ENCODE measurements at regions of chr5 and their contacts with region 1.

Region 1: GRCh38 chr5:16797951-16798350 is 138.1 kb downstream of the MYO10 start:
- DNase-seq: no peak
- H3K4me3 ChIP-seq: no peak overlapping the region
- H3K27ac ChIP-seq: no peak overlapping the region
- H3K4me1 ChIP-seq: peaks cover 51% of the 10 kb centered on the region
- H3K27me3 ChIP-seq: no peaks in the 10 kb centered on the region
- CTCF ChIP-seq: no peak

Region 2: DNA sequence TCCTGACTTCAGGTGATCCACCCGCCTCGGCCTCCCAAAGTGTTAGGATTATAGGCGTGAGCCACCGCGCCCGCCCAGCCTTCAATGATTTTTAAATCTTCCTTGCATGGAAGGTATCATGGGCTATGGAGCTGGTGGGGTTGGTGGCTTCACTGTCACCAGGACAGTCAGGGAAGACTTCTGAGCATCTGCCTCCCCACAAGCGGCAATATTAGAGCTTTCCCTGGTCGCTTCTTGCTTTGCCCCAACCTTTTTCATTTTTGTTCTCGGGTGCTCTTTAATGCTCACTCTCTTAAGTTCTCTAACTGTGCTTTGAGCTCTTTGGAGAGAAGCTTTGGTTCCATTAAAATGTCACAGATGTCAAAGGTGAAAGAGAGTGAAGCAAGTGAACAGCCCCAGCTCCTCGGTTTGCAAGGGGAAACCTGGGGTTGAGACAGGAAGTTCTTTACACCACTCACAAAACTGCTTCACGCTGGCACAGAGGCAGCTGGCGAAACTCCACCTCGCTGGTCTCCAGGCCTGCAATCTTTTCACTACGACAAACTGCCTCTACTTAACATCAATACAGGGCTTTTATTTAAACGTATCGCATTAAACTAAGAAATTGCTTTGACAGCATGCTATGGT is 38.7 kb before region 1 on chr5:
- CTCF ChIA-PET with region 1: no interaction called
- POLR2A ChIA-PET with region 1: no interaction called
- intact Hi-C with region 1: no loop called
- DNase-seq: peak; percentile 58
- H3K4me3 ChIP-seq: no peak overlapping the region
- H3K27ac ChIP-seq: peak overlapping the region; percentile 31
- H3K4me1 ChIP-seq: peaks cover 30% of the 10 kb centered on the region
- H3K27me3 ChIP-seq: no peaks in the 10 kb centered on the region
- CTCF ChIP-seq: no peak

Region 3: DNA sequence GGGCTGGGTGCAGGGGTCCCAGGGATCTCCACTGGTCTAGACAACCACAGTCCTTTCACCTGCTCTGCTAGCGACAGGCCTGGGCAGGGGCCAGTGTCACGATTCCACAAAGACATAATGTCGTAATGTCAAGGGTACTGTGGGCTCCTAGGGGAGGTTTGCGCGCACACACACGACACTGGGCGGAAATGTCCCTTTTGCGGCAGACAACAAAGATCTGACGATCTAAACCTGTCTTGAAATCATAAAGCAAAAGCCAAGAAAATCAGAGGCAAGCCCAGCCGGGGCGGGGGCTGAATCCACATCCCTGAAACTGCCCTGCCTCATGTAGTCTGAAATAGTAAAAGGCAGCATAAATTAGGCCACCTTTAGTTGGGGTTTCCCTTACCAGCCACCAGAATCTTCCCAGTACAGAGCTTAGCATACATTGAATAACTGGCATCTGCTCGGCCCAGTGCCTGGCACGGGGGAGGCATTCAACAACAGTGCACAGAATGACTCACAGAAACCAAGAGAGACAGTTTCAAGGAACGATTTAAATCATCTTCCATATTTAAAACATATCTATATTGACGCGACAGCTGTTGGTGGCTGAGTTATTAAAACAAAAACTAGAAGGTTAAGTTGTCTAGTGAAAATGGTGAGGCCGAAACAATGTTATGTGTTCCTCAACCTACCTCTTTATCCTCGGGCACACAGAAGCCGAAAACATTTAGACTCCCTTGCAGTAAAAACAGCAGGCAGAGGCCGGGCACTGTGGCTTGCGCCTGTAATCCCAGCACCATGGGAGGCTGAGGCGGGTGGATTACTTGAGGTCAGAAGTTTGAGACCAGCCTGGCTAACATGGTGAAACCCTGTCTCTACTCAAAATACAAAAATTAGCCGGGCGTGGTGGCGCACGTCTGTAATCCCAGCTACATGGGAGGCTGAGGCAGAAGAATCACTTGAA is 12.8 kb before region 1 on chr5:
- CTCF ChIA-PET with region 1: no interaction called
- POLR2A ChIA-PET with region 1: no interaction called
- intact Hi-C with region 1: loop called (anchors 1 kb)
- DNase-seq: no peak
- H3K4me3 ChIP-seq: no peak overlapping the region
- H3K27ac ChIP-seq: no peak overlapping the region
- H3K4me1 ChIP-seq: peaks cover 40% of the 10 kb centered on the region
- H3K27me3 ChIP-seq: no peaks in the 10 kb centered on the region
- CTCF ChIP-seq: no peak

Region 4: DNA sequence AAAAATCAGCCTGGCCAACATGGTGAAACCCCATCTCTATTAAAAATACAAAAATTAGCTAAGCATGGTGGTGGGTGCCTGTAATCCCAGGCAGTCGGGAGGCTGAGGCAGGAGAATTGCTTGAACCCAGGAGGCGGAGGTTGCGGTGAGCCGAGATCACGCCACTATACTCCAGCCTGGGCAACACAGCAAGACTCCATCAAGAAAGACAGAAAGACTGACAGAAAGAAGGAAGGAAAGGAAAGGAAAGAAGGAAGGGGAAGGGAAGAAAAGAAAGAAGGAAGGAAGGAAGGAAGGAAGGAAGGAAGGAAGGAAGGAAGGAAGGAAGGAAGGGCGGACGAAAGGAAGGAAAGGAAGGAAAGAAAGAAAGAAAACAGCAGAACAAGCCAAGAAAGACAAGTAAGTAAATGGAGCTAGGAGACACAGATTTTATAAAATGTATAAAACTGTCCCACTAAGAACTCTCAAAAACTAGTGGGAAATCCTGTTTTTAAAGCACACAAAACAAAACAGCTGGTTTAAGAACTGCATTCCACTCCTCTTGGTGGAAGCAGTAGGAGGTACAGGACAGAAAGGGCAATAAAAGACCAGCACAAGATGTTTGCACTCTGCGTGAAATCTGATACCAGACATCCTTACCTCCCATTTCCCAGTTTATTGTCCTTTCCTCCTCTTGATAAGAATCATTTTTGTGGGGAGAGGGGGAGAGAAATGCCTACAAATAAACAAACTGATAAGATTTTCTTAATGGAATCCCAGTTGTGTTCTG is 91.4 kb after region 1 on chr5:
- CTCF ChIA-PET with region 1: no interaction called
- POLR2A ChIA-PET with region 1: no interaction called
- intact Hi-C with region 1: loop called (anchors 2 kb)
- DNase-seq: peak; percentile 90
- H3K4me3 ChIP-seq: peak overlapping the region; percentile 18
- H3K27ac ChIP-seq: peak overlapping the region; percentile 88
- H3K4me1 ChIP-seq: peaks cover 94% of the 10 kb centered on the region
- H3K27me3 ChIP-seq: no peaks in the 10 kb centered on the region
- CTCF ChIP-seq: no peak